ENCODE measurements at regions of chr14 and their contacts with region 1.

Region 1: GRCh38 chr14:77457522-77458290 is at the starts of genes AHSA1 and VIPAS39:
- DNase-seq: peak; percentile 98
- H3K4me3 ChIP-seq: peak within 1 kb of the TSS; percentile 99
- H3K27ac ChIP-seq: peak within 1 kb of the TSS; percentile 93
- H3K27me3 ChIP-seq: no peaks in the 10 kb centered on the region
- CTCF ChIP-seq: no peak
- polyA plus RNA-seq, gene AHSA1: 121 and 145 TPM in 2 replicates
- polyA plus RNA-seq, gene VIPAS39: 35.1 and 42.2 TPM in 2 replicates

Region 2: DNA sequence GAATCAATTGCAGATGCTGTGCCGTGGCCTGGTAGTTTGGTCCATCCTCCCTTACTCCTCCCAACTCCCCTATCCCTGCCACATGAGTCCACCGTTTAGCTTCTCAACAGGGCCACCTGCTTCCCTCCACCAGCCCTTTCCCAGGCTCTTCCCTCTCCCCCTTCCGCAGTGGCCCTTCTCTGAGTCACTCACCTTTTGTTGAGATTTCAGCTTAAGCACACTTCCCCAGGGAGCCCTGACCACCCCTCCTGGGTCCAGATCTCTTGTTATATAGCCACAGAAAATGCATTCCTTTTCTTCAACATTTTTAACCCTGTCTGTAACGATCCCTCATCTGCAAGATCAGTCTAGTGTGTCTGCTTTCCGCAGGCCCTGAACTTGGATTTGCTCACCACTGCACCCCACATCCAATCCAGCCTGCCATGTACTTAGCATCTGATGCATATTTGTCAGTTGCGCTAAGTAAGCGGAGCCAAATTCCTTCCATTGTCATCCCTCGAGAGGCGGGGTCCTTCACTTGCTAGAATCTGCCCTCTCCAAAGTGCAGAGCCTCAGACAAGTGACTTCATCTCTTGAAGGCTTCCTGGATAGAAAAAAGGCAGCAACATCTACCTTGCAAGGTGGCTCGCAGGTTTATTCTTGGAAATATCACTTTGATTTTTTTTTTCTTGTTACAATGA is 235.0 kb before region 1 on chr14:
- CTCF ChIA-PET with region 1: no interaction called
- POLR2A ChIA-PET with region 1: no interaction called
- DNase-seq: no peak
- H3K4me3 ChIP-seq: no peak overlapping the region
- H3K27ac ChIP-seq: no peak overlapping the region
- H3K27me3 ChIP-seq: no peaks in the 10 kb centered on the region
- CTCF ChIP-seq: no peak

Region 3: GRCh38 chr14:77467801-77468200 is 10.1 kb after region 1 on chr14:
- CTCF ChIA-PET with region 1: interaction called, 20 read pairs
- POLR2A ChIA-PET with region 1: no interaction called
- DNase-seq: no peak
- H3K4me3 ChIP-seq: no peak overlapping the region
- H3K27ac ChIP-seq: no peak overlapping the region
- H3K27me3 ChIP-seq: peaks cover 5% of the 10 kb centered on the region
- CTCF ChIP-seq: no peak

Region 4: GRCh38 chr14:77542421-77543239 is 84.9 kb after region 1 on chr14:
- CTCF ChIA-PET with region 1: interaction called, 15 read pairs
- POLR2A ChIA-PET with region 1: interaction called, 4 read pairs
- DNase-seq: no peak
- H3K4me3 ChIP-seq: no peak overlapping the region
- H3K27ac ChIP-seq: peak overlapping the region; percentile 25
- H3K27me3 ChIP-seq: no peaks in the 10 kb centered on the region
- CTCF ChIP-seq: no peak

Region 5: GRCh38 chr14:77612005-77612620 is 154.4 kb after region 1 on chr14:
- CTCF ChIA-PET with region 1: interaction called, 11 read pairs
- POLR2A ChIA-PET with region 1: no interaction called
- DNase-seq: no peak
- H3K4me3 ChIP-seq: no peak overlapping the region
- H3K27ac ChIP-seq: no peak overlapping the region
- H3K27me3 ChIP-seq: no peaks in the 10 kb centered on the region
- CTCF ChIP-seq: no peak

Measured in AG04450 (cell line).